ENCODE measurements at regions of chr3 and their contacts with region 1.

Region 1: DNA sequence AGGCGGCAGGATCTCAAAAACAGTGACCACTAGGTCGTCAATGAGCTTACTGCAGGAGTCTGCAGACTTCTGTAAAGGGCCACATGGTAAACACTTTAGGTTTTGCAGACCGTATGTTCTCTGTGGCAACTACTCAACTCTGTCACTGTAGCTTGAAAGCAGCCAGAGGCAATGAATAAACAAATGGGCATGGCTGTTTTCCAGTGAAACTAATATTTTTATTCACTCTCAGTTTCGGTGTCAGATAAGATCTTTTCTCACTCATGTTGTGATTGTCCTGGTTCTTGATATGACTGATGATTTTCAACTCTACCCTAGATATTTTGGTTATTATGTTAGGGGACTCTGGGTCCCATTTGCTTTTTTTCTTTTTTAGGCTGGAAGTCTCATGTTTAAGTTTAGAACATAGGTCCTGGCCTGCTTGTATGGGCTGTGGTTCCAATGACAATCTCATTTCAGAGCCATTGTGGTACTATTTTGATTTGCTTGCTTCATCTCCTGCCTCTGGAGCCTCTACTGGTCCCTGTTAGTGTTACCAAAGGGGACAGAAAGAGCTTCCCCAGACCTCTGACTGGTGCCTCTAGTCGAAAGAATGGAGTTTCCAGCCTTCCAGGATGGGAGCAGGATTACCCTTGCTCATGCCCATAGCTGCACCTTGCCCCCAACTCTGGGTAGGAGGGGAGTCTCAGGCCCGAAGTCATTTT is 222.0 kb downstream of the STT3B start:
- DNase-seq: peak; percentile 16
- H3K4me3 Mint-ChIP-seq: no peak overlapping the region
- H3K27ac Mint-ChIP-seq: peak overlapping the region; percentile 98
- H3K4me1 Mint-ChIP-seq: peaks cover 54% of the 10 kb centered on the region
- H3K27me3 Mint-ChIP-seq: no peaks in the 10 kb centered on the region

Region 2: GRCh38 chr3:30611613-30612436 is 1142.9 kb before region 1 on chr3:
- intact Hi-C with region 1: loop called (anchors 5 kb)
- DNase-seq: no peak
- H3K4me3 Mint-ChIP-seq: peak overlapping the region; percentile 68
- H3K27ac Mint-ChIP-seq: peak overlapping the region; percentile 77
- H3K4me1 Mint-ChIP-seq: peaks cover 75% of the 10 kb centered on the region
- H3K27me3 Mint-ChIP-seq: no peaks in the 10 kb centered on the region

Region 3: GRCh38 chr3:31105438-31106077 is 649.2 kb before region 1 on chr3:
- intact Hi-C with region 1: loop called (anchors 5 kb)
- DNase-seq: no peak
- H3K4me3 Mint-ChIP-seq: no peak overlapping the region
- H3K27ac Mint-ChIP-seq: no peak overlapping the region
- H3K4me1 Mint-ChIP-seq: peaks cover 42% of the 10 kb centered on the region
- H3K27me3 Mint-ChIP-seq: peaks cover 5% of the 10 kb centered on the region

Region 4: GRCh38 chr3:31250116-31250777 is 504.5 kb before region 1 on chr3:
- intact Hi-C with region 1: loop called (anchors 1 kb)
- DNase-seq: no peak
- H3K4me3 Mint-ChIP-seq: no peak overlapping the region
- H3K27ac Mint-ChIP-seq: peak overlapping the region; percentile 5
- H3K4me1 Mint-ChIP-seq: peaks cover 57% of the 10 kb centered on the region
- H3K27me3 Mint-ChIP-seq: peaks cover under 1% of the 10 kb centered on the region

Region 5: DNA sequence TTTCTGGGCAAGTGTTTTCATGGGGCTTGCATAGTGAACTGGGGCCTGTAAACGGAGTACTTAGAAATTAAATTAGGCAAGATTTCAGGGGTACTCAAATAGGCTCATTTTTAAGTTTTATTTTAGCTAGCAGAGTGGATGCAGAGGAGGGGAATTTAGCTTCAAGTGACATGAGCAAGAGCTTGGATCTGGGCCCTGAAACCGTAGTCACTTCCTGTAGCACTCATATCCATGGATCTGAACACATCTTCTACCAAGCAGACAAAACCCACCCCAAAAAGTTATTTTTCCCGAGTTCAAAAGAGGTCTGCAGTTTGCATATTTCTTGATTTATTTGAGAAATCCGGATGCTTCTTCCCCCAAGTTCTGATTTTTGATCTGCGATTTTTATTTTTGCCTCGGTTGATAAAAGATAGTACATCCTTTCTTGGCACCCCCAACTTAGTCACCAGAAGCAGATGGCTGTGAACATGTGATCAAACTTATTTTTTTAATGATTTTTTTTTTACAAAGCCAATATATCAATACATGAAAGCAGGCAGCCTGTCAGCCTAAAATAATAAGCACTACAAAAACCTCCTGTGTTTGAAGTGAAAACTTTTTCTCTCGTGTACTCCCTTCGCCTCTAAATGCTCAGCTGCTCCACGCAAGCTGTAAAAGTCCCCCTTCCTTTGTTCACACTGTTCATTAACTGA is 258.6 kb before region 1 on chr3:
- intact Hi-C with region 1: no loop called
- DNase-seq: no peak
- H3K4me3 Mint-ChIP-seq: no peak overlapping the region
- H3K27ac Mint-ChIP-seq: no peak overlapping the region
- H3K4me1 Mint-ChIP-seq: no peaks in the 10 kb centered on the region
- H3K27me3 Mint-ChIP-seq: peaks cover 5% of the 10 kb centered on the region

Region 6: DNA sequence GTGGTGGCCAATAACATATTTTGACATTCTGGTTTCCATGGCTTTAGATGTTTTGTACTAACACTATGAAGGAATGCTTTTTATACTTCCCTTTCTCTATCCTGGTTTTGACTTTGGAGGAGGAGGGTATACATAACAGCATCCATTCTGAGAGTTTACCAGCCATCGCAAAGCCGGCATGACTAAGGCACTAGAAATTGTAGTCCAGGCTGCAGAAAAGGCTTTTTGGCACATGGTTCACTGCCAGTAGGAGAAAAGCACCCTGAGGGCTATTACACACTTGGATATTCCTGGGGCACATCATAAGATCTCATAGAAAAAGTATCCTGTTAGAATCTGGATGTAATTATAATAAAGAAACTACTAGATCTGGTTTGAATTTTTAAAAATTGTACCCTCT is 120.2 kb before region 1 on chr3:
- intact Hi-C with region 1: loop called (anchors 5 kb)
- DNase-seq: no peak
- H3K4me3 Mint-ChIP-seq: no peak overlapping the region
- H3K27ac Mint-ChIP-seq: peak overlapping the region; percentile 38
- H3K4me1 Mint-ChIP-seq: peaks cover 36% of the 10 kb centered on the region
- H3K27me3 Mint-ChIP-seq: no peaks in the 10 kb centered on the region

Region 7: GRCh38 chr3:31925271-31925630 is 170.5 kb after region 1 on chr3:
- intact Hi-C with region 1: loop called (anchors 2 kb)
- DNase-seq: no peak
- H3K4me3 Mint-ChIP-seq: no peak overlapping the region
- H3K27ac Mint-ChIP-seq: peak overlapping the region; percentile 65
- H3K4me1 Mint-ChIP-seq: peaks cover 38% of the 10 kb centered on the region
- H3K27me3 Mint-ChIP-seq: no peaks in the 10 kb centered on the region

Region 8: DNA sequence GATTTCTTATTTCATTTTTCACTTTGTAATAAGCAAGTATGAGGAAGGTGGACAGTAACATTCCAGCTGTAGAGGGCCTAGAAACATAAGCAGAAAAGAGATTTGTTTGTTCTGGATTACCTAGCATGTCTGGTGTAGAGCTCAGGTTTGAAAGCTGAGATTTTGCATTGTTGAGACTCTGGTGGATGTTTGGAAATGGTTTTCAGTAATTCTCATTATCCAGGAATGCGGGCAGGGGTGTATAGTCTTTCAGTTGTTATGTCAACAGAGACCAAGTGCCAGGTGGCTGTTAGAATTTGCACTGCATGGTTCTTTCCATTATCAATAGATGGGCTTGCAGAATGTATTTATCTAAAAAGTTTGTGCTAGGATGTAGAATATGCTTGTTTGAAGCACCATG is 362.6 kb after region 1 on chr3:
- intact Hi-C with region 1: loop called (anchors 10 kb)
- DNase-seq: no peak
- H3K4me3 Mint-ChIP-seq: no peak overlapping the region
- H3K27ac Mint-ChIP-seq: no peak overlapping the region
- H3K4me1 Mint-ChIP-seq: peaks cover 41% of the 10 kb centered on the region
- H3K27me3 Mint-ChIP-seq: peaks cover 2% of the 10 kb centered on the region

Measured in activated T-helper 2 cell treated with anti-CD3 and anti-CD28 coated beads, Interferon-gamma antibody, Interleukin-2, Interleukin-4, amounts not matched to agents 10 μg/mL and 5 μg/mL and 100 μg/mL, durations not matched to agents 14 hours and 24 hours and 36 hours (primary cell).